HepG2 (cell line): ENCODE measurements at regions of chr19 and their contacts with region 1.

Region 1: DNA sequence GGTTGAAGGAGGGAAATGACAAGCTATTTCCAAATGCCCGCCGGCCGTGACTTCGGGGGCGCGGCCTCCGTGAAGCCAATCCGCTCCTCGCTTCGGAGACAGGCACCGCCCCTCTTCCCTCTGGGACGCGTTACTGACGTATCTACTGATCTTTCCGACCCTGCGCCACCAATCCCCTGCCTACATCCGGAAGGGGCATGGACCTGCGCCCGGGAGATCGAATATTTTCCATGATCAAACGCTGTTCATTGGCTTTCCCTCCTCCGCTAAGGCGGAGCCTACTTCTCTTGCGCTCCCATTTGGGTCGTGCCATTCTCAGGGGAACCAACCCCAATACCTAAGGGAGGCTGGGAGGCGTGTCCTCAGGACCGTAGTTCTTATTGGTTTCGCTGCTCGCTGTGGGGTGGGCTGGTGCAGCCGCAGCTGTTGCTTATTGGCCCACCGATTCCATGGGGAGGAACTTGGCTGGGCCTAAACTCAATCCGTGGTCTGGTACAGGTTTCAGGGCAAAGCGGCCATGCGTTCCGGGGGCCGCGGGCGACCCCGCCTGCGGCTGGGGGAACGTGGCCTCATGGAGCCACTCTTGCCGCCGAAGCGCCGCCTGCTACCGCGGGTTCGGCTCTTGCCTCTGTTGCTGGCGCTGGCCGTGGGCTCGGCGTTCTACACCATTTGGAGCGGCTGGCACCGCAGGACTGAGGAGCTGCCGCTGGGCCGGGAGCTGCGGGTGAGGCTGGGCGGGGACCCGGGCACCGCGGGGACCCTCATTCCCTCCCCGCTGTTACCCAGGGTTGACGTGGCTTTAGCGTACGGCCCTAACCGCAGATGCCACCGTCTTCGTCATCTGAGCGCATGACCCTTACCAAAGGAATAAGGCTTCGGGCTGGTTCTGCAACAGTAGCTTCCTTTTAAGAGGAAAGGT is at the start of gene QPCTL:
- DNase-seq: peak; percentile 100
- ATAC-seq: peak; percentile 96
- H3K4me3 ChIP-seq: peak within 1 kb of the TSS; percentile 92 to 95 (median 94)
- H3K27ac ChIP-seq: peak within 1 kb of the TSS; percentile 90
- H3K4me1 ChIP-seq: peaks cover 17% of the 10 kb centered on the region
- H3K27me3 ChIP-seq: no peaks in the 10 kb centered on the region; a peak in 1 of 5 replicates
- CTCF ChIP-seq: no peak
- EP300 ChIP-seq: no peak
- POLR2A ChIP-seq: peak; percentile 95 to 96
- RAD21 ChIP-seq: peak; percentile 49; the same call in 1 of the 2 replicates
- total RNA-seq, gene QPCTL: 6.8 and 16.0 TPM in 2 replicates

Region 2: GRCh38 chr19:45444311-45445041 is 248.0 kb before region 1 on chr19:
- CTCF ChIA-PET with region 1: no interaction called
- POLR2A ChIA-PET with region 1: no interaction called
- in situ Hi-C with region 1: no loop called
- intact Hi-C with region 1: no loop called
- DNase-seq: peak; percentile 80
- ATAC-seq: peak; percentile 77
- H3K4me3 ChIP-seq: peak overlapping the region; percentile 60 to 78 (median 63)
- H3K27ac ChIP-seq: peak overlapping the region; percentile 89
- H3K4me1 ChIP-seq: peaks cover 77% of the 10 kb centered on the region
- H3K27me3 ChIP-seq: no peaks in the 10 kb centered on the region
- CTCF ChIP-seq: peak; percentile 46
- EP300 ChIP-seq: 0 out of 4 replicates have a peak, but pooled peaks have one; percentile 5 to 26
- POLR2A ChIP-seq: peak in 1 of 2 experiments; percentile 23; a peak in 1 of 4 replicates
- RAD21 ChIP-seq: peak; percentile 45; the same call in 1 of the 2 replicates

Region 3: GRCh38 chr19:45584332-45585157 is 107.9 kb before region 1 on chr19 and contains the start of gene OPA3:
- CTCF ChIA-PET with region 1: no interaction called
- POLR2A ChIA-PET with region 1: interaction called, 18 read pairs
- in situ Hi-C with region 1: no loop called
- intact Hi-C with region 1: loop called (anchors 2 kb)
- DNase-seq: peak; percentile 98
- ATAC-seq: peak; percentile 91
- H3K4me3 ChIP-seq: peak within 1 kb of the TSS; percentile 63 to 80 (median 74)
- H3K27ac ChIP-seq: peak within 1 kb of the TSS; percentile 100
- H3K4me1 ChIP-seq: peaks cover 52% of the 10 kb centered on the region
- H3K27me3 ChIP-seq: no peaks in the 10 kb centered on the region
- CTCF ChIP-seq: peak; percentile 25; the same call in 1 of the 2 replicates
- EP300 ChIP-seq: peak in 1 of 2 experiments; percentile 53; a peak in 1 of 4 replicates
- POLR2A ChIP-seq: peak; percentile 86 to 91
- RAD21 ChIP-seq: peak; percentile 29; the same call in 1 of the 2 replicates
- total RNA-seq, gene OPA3: 7.8 and 8.3 TPM in 2 replicates

Region 4: GRCh38 chr19:45591004-45591637 is 101.3 kb before region 1 on chr19:
- CTCF ChIA-PET with region 1: interaction called, 14 read pairs
- POLR2A ChIA-PET with region 1: interaction called, 3 read pairs
- in situ Hi-C with region 1: no loop called
- intact Hi-C with region 1: no loop called
- DNase-seq: peak; percentile 64
- ATAC-seq: peak; percentile 94
- H3K4me3 ChIP-seq: no peak overlapping the region; a peak in 1 of 6 replicates
- H3K27ac ChIP-seq: no peak overlapping the region
- H3K4me1 ChIP-seq: peaks cover 27% of the 10 kb centered on the region
- H3K27me3 ChIP-seq: peaks cover 0 to 3% of the 10 kb centered on the region in 2 experiments; a peak in 2 of 5 replicates
- CTCF ChIP-seq: peak; percentile 99
- EP300 ChIP-seq: no peak
- POLR2A ChIP-seq: no peak
- RAD21 ChIP-seq: peak; percentile 90

Region 5: GRCh38 chr19:45670670-45671453 is 21.6 kb before region 1 on chr19:
- CTCF ChIA-PET with region 1: no interaction called
- POLR2A ChIA-PET with region 1: interaction called, 12 read pairs
- in situ Hi-C with region 1: no loop called
- intact Hi-C with region 1: no loop called
- DNase-seq: peak; percentile 55
- ATAC-seq: peak; percentile 36
- H3K4me3 ChIP-seq: peak overlapping the region in 1 of 3 experiments; percentile 20; a peak in 2 of 6 replicates
- H3K27ac ChIP-seq: no peak overlapping the region
- H3K4me1 ChIP-seq: peaks cover 35% of the 10 kb centered on the region
- H3K27me3 ChIP-seq: peaks cover 2 to 3% of the 10 kb centered on the region in 2 experiments; a peak in 1 of 5 replicates
- CTCF ChIP-seq: no peak
- EP300 ChIP-seq: no peak
- POLR2A ChIP-seq: no peak
- RAD21 ChIP-seq: no peak

Region 6: GRCh38 chr19:45681391-45682015 is 10.9 kb before region 1 on chr19:
- CTCF ChIA-PET with region 1: interaction called, 4 read pairs
- POLR2A ChIA-PET with region 1: interaction called, 44 read pairs
- in situ Hi-C with region 1: no loop called
- intact Hi-C with region 1: loop called (anchors 1 kb)
- DNase-seq: peak; percentile 63
- ATAC-seq: peak; percentile 82
- H3K4me3 ChIP-seq: peak overlapping the region; percentile 51 to 68 (median 53)
- H3K27ac ChIP-seq: no peak overlapping the region
- H3K4me1 ChIP-seq: peaks cover 30% of the 10 kb centered on the region
- H3K27me3 ChIP-seq: no peaks in the 10 kb centered on the region; a peak in 1 of 5 replicates
- CTCF ChIP-seq: peak; percentile 94
- EP300 ChIP-seq: 0 out of 4 replicates have a peak, but pooled peaks of 1 of the 2 experiments have one; percentile 10
- POLR2A ChIP-seq: peak in 1 of 2 experiments; percentile 55; a peak in 1 of 4 replicates
- RAD21 ChIP-seq: peak; percentile 87

Region 7: DNA sequence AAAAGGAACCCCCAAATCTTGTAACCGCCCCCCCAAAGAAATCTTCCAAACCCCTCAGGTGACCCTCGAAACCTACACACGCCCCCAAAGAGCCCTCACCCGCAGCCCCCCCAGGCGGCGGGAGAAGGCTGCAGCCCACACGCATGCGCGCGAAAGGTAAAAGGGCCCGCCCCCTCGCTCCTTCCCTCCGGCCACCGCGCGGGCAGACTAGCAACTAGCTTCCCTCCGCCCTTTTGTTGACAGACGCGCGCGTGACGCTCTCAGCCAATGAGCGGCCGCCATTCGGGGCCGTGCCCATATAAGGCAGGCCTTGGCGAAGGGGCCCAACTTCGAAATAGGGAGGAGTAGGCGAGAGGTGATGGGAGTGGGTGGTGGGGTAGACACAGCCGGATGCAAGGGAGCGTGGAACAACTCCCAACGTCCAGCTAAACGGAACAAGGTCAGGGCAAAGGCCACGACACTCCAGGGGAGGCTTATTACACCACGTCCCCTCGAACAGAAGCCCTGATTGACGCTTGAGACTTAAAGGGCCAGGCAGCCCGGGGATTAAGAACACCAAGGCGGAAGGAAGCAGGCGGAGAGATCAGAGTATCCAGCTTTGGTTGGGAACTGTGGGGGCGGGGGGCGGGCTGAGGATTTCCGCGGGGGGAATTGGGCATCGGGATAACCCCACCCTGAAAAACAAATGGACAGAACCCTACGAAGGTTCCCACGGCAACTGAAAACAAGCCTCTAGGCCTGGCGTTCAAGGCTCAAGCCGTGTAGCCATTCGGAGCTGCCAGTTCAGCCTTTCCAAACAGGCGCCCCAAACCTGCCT is 24.9 kb after region 1 on chr19:
- CTCF ChIA-PET with region 1: no interaction called
- POLR2A ChIA-PET with region 1: interaction called, 47 read pairs
- in situ Hi-C with region 1: no loop called
- intact Hi-C with region 1: loop called (anchors 1 kb)
- DNase-seq: peak; percentile 99
- ATAC-seq: peak; percentile 94
- H3K4me3 ChIP-seq: peak overlapping the region; percentile 71 to 79 (median 73)
- H3K27ac ChIP-seq: peak overlapping the region; percentile 91
- H3K4me1 ChIP-seq: peaks cover 65% of the 10 kb centered on the region
- H3K27me3 ChIP-seq: no peaks in the 10 kb centered on the region; a peak in 1 of 5 replicates
- CTCF ChIP-seq: peak; percentile 37
- EP300 ChIP-seq: peak in 1 of 2 experiments; percentile 66; a peak in 2 of 4 replicates
- POLR2A ChIP-seq: peak; percentile 41 to 60; a peak in 3 of 4 replicates
- RAD21 ChIP-seq: peak; percentile 8; the same call in 1 of the 2 replicates

Region 8: GRCh38 chr19:45730389-45731288 is 38.2 kb after region 1 on chr19 and contains the start of gene FBXO46:
- CTCF ChIA-PET with region 1: no interaction called
- POLR2A ChIA-PET with region 1: interaction called, 15 read pairs
- in situ Hi-C with region 1: no loop called
- intact Hi-C with region 1: no loop called
- DNase-seq: peak; percentile 96
- ATAC-seq: peak; percentile 98
- H3K4me3 ChIP-seq: peak within 1 kb of the TSS; percentile 85 to 94 (median 90)
- H3K27ac ChIP-seq: peak within 1 kb of the TSS; percentile 50
- H3K4me1 ChIP-seq: peaks cover 40% of the 10 kb centered on the region
- H3K27me3 ChIP-seq: peaks cover 0 to 4% of the 10 kb centered on the region in 2 experiments; a peak in 1 of 5 replicates
- CTCF ChIP-seq: peak; percentile 75
- EP300 ChIP-seq: peak in 1 of 2 experiments; percentile 12; a peak in 1 of 4 replicates
- POLR2A ChIP-seq: peak in 1 of 2 experiments; percentile 84; a peak in 2 of 4 replicates
- RAD21 ChIP-seq: no peak
- total RNA-seq, gene FBXO46: 4.7 and 6.2 TPM in 2 replicates